Activated CD8-positive, alpha-beta memory T cell treated with anti-CD3 and anti-CD28 coated beads, Interleukin-2, amount 10 ng/mL, durations not matched to agents 7 days and 5 days (primary cell): ENCODE measurements at regions of chr2 and their contacts with region 1.

Region 1: DNA sequence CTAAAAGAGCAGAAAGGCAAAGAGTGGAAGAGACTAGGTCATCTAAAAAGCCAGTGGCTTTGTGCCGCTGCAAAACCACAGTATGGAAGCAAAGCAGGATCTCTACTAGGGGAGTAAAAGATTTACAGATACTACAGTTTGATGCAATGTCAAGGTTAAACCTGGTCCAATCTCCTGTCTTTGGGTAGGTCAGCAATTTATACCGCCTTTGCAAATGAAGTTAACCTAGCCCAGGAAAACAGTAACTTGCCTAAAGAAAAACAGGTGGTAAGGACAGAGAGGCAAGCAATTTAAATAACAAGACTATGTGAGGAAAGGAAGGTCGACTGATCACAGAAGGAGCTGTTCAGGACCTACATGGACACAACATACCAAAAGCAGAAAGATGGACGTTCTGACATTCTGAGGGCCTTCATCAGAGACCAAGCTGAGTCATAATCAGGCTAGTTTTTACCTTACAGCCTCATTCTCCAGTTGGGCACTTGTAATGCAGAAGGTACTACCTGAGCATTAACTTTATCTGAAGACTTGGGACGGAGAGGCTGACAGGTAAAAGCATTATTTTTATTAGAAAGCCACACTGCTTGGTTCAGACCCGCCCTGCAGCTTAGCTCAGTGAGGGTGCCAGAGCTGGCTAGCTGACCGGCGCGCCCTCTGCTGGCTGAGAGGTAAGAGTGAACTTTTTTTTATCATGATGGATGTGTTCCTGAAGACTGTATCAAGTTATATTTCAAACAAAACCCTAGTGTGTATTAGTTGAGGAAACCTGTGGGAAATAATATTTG is 15.9 kb downstream of the CDKL4 start:
- DNase-seq: peak; percentile 90
- ATAC-seq: peak; percentile 88
- H3K4me3 Mint-ChIP-seq: peak overlapping the region; percentile 74
- H3K27ac Mint-ChIP-seq: peak overlapping the region; percentile 98
- H3K4me1 Mint-ChIP-seq: peaks cover 54% of the 10 kb centered on the region
- H3K27me3 Mint-ChIP-seq: no peaks in the 10 kb centered on the region

Region 2: DNA sequence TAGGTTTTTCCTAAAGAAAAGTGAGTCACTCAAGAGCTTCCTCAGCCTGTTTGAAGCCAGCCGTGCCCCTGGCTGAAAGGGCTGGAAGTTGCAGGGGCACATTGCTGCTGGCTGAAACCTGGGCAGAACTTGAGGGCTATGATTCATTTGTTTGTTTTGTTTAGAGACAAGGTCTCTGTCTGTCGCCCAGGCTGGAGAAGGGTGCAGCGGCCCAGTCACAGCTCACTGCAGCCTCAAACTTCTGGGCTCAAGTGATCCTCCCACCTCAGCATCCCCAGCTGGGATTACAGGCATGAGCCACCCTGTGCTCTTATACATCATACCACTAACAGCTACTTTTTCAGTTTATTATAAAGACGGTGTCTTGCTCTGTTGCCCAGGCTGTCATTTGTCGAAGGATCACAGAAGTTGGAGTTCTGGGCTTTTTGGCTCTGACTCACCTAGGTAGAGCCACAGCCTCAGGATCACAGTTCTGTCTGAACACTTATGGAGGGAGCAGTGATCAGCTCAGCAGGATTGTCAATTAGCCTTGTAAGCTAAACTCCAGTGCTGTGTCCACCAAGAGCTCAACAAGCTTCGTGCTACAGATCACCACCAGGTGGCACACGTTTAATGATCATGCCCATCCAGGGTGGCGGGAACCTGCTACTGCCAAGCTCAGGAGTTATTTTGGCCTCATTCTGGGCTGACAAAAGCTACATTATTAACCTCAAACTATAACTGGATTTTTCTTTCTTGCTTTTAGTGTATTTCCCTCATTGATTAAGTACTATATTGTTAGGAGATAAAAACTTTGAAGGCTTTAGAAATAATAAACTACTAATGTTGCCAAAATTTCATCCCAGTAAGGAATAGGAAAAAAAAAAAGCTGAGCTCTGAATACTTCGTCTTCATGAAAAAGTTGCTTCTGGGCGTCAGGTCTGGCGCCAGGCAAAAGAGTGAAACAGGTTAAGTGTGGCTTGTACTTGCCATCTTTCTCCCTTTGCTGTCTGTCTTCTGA is 280.3 kb before region 1 on chr2:
- CTCF ChIA-PET with region 1: interaction called, 129 read pairs
- DNase-seq: peak; percentile 83
- ATAC-seq: peak; percentile 85
- H3K4me3 Mint-ChIP-seq: no peak overlapping the region
- H3K27ac Mint-ChIP-seq: no peak overlapping the region
- H3K4me1 Mint-ChIP-seq: no peaks in the 10 kb centered on the region
- H3K27me3 Mint-ChIP-seq: peaks cover 6% of the 10 kb centered on the region

Region 3: GRCh38 chr2:39069136-39069515 is 158.7 kb before region 1 on chr2:
- CTCF ChIA-PET with region 1: interaction called, 14 read pairs
- DNase-seq: no peak
- ATAC-seq: peak; percentile 61
- H3K4me3 Mint-ChIP-seq: no peak overlapping the region
- H3K27ac Mint-ChIP-seq: no peak overlapping the region
- H3K4me1 Mint-ChIP-seq: peaks cover 44% of the 10 kb centered on the region
- H3K27me3 Mint-ChIP-seq: no peaks in the 10 kb centered on the region

Region 4: DNA sequence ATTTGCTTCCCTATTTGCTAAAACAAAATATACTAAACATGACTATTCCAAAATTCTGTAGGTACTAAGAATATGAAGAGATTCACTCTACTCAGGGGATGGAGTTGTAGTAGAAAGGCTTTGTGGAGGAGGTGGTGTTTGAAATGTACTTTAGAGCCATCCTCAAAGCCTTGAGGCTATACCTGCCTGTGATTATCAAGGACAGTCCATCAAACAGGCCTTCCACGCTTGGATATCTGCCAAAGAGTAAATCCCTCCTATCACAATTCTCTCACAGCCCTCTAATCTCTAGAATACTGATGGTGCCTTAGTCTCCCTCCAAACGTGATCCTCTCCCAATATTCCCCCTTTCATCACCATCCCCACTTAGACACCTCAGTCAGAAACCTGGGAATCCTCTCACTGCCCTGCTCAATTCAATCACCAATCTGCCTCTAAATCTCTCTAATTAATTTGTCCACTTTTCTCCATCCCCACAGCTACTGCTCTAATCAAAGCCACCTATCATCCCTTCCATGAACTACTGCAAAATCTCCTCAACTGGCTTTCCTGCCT is 120.0 kb before region 1 on chr2:
- CTCF ChIA-PET with region 1: interaction called, 10 read pairs
- DNase-seq: no peak
- ATAC-seq: no peak
- H3K4me3 Mint-ChIP-seq: no peak overlapping the region
- H3K27ac Mint-ChIP-seq: peak overlapping the region; percentile 54
- H3K4me1 Mint-ChIP-seq: peaks cover 57% of the 10 kb centered on the region
- H3K27me3 Mint-ChIP-seq: no peaks in the 10 kb centered on the region

Region 5: DNA sequence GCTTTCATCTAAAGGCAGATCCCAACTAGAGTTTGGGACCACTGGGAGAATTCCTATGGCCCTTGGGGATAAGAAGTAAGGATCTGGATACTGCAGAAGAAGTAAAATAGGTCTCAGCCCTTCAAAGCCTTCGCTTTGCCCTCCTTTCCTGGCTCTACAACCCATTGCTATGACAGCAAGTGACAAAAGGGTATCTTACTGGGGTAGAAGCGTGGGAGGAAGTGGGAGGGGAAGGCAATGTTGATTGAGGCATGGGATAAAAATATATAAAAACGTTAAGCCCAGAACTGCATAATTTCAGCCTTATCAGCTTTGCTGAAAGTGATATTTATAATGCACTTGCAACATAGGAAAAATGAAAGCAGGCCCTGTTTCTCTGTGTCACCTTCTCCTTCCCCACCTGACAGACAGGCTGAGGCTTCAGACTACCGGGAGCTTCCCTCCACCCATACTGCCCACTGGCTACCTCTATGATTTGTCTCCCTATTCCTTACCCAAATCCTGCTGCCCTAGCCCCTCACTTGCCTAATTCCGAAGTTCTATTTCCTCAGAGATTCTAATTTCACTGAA is 92.0 kb before region 1 on chr2:
- CTCF ChIA-PET with region 1: interaction called, 22 read pairs
- DNase-seq: no peak
- ATAC-seq: peak; percentile 46
- H3K4me3 Mint-ChIP-seq: peak overlapping the region; percentile 32
- H3K27ac Mint-ChIP-seq: peak overlapping the region; percentile 84
- H3K4me1 Mint-ChIP-seq: peaks cover 66% of the 10 kb centered on the region
- H3K27me3 Mint-ChIP-seq: peaks cover 2% of the 10 kb centered on the region

Region 6: GRCh38 chr2:39216346-39217191 is 11.3 kb before region 1 on chr2:
- CTCF ChIA-PET with region 1: interaction called, 34 read pairs
- DNase-seq: peak; percentile 94
- ATAC-seq: peak; percentile 85
- H3K4me3 Mint-ChIP-seq: peak overlapping the region; percentile 49
- H3K27ac Mint-ChIP-seq: peak overlapping the region; percentile 97
- H3K4me1 Mint-ChIP-seq: peaks cover 82% of the 10 kb centered on the region
- H3K27me3 Mint-ChIP-seq: no peaks in the 10 kb centered on the region

Region 7: GRCh38 chr2:39350658-39351057 is 122.8 kb after region 1 on chr2:
- CTCF ChIA-PET with region 1: no interaction called
- DNase-seq: no peak
- ATAC-seq: no peak
- H3K4me3 Mint-ChIP-seq: no peak overlapping the region
- H3K27ac Mint-ChIP-seq: no peak overlapping the region
- H3K4me1 Mint-ChIP-seq: no peaks in the 10 kb centered on the region
- H3K27me3 Mint-ChIP-seq: no peaks in the 10 kb centered on the region